HepG2 (cell line): ENCODE measurements at regions of chr20 and their contacts with region 1.

Region 1: DNA sequence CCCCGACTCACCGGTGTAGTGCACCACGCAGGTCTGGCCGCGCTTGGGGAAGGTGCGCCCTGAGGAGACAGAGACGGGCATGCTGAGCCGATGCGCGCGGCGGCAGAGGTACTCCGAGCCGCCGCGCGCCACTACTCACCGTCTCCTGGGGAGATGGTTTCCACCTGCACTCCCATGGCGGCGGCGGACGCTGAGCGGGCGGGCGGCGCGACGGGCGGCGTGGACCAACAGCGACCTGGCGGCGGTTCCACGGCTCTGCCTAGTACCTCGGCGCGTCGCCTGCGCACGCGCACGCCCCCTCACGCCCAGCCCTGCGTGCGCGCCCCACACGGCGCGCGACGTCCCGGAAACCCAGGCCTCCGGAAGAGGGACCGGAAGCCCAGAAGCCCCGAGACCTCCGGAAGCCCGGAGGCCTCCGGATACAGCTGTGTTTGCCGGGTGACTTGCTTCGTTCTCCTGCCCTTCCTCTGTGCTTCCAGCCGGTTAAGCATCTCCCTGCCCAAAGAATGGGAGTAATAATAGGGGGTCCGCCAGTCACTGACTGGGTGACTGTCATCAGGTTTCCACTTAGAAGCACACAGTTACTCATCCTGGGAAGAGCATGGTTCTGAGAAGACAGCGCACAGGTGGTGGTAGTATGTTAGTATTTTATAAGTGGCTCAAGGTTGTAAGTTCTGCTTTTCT is at the start of gene FKBP1A:
- DNase-seq: peak; percentile 94
- ATAC-seq: peak; percentile 95
- H3K4me3 ChIP-seq: peak within 1 kb of the TSS; percentile 78 to 91 (median 91)
- H3K27ac ChIP-seq: peak within 1 kb of the TSS; percentile 36
- H3K4me1 ChIP-seq: peaks cover 53% of the 10 kb centered on the region
- H3K27me3 ChIP-seq: peaks cover 0 to 17% of the 10 kb centered on the region in 2 experiments; a peak in 2 of 5 replicates
- CTCF ChIP-seq: peak; percentile 48
- EP300 ChIP-seq: peak in 1 of 2 experiments; percentile 64; a peak in 3 of 4 replicates
- POLR2A ChIP-seq: peak; percentile 69 to 98
- RAD21 ChIP-seq: peak; percentile 71
- total RNA-seq, gene FKBP1A: 119 and 188 TPM in 2 replicates

Region 2: GRCh38 chr20:986733-987355 is 406.1 kb before region 1 on chr20:
- CTCF ChIA-PET with region 1: no interaction called
- POLR2A ChIA-PET with region 1: no interaction called
- in situ Hi-C with region 1: no loop called
- intact Hi-C with region 1: no loop called
- DNase-seq: no peak
- ATAC-seq: no peak; the same call in 2 of the 3 replicates
- H3K4me3 ChIP-seq: no peak overlapping the region
- H3K27ac ChIP-seq: no peak overlapping the region
- H3K4me1 ChIP-seq: no peaks in the 10 kb centered on the region
- H3K27me3 ChIP-seq: peaks cover 3 to 34% of the 10 kb centered on the region in 2 experiments; a peak in 4 of 5 replicates
- CTCF ChIP-seq: no peak
- EP300 ChIP-seq: no peak
- POLR2A ChIP-seq: no peak
- RAD21 ChIP-seq: no peak

Region 3: GRCh38 chr20:1118336-1119127 is 274.4 kb before region 1 on chr20 and contains the start of gene PSMF1:
- CTCF ChIA-PET with region 1: no interaction called
- POLR2A ChIA-PET with region 1: no interaction called
- in situ Hi-C with region 1: no loop called
- intact Hi-C with region 1: loop called (anchors 10 kb)
- DNase-seq: peak; percentile 92
- ATAC-seq: peak; percentile 89
- H3K4me3 ChIP-seq: peak within 1 kb of the TSS; percentile 80 to 99 (median 93)
- H3K27ac ChIP-seq: peak within 1 kb of the TSS; percentile 72
- H3K4me1 ChIP-seq: peaks cover 62% of the 10 kb centered on the region
- H3K27me3 ChIP-seq: no peaks in the 10 kb centered on the region; a peak in 1 of 5 replicates
- CTCF ChIP-seq: peak; percentile 63
- EP300 ChIP-seq: peak; percentile 73 to 86
- POLR2A ChIP-seq: peak; percentile 97
- RAD21 ChIP-seq: peak; percentile 77
- total RNA-seq, gene PSMF1: 86.0 and 113 TPM in 2 replicates

Region 4: GRCh38 chr20:1313236-1313964 is 79.6 kb before region 1 on chr20:
- CTCF ChIA-PET with region 1: interaction called, 18 read pairs
- POLR2A ChIA-PET with region 1: interaction called, 3 read pairs
- in situ Hi-C with region 1: no loop called
- intact Hi-C with region 1: loop called (anchors 2 kb)
- DNase-seq: peak; percentile 71
- ATAC-seq: peak; percentile 83
- H3K4me3 ChIP-seq: no peak overlapping the region
- H3K27ac ChIP-seq: no peak overlapping the region
- H3K4me1 ChIP-seq: peaks cover 18% of the 10 kb centered on the region
- H3K27me3 ChIP-seq: peaks cover 0 to 3% of the 10 kb centered on the region in 2 experiments; a peak in 3 of 5 replicates
- CTCF ChIP-seq: peak; percentile 97
- EP300 ChIP-seq: no peak
- POLR2A ChIP-seq: no peak
- RAD21 ChIP-seq: peak; percentile 95

Region 5: GRCh38 chr20:1381753-1382591 is 11.0 kb before region 1 on chr20:
- CTCF ChIA-PET with region 1: no interaction called
- POLR2A ChIA-PET with region 1: interaction called, 11 read pairs
- in situ Hi-C with region 1: no loop called
- intact Hi-C with region 1: no loop called
- DNase-seq: no peak
- ATAC-seq: no peak
- H3K4me3 ChIP-seq: no peak overlapping the region
- H3K27ac ChIP-seq: no peak overlapping the region
- H3K4me1 ChIP-seq: peaks cover 81% of the 10 kb centered on the region
- H3K27me3 ChIP-seq: no peaks in the 10 kb centered on the region
- CTCF ChIP-seq: no peak
- EP300 ChIP-seq: no peak
- POLR2A ChIP-seq: no peak
- RAD21 ChIP-seq: no peak

Region 6: GRCh38 chr20:1437235-1437904 is 44.4 kb after region 1 on chr20:
- CTCF ChIA-PET with region 1: interaction called, 3 read pairs
- POLR2A ChIA-PET with region 1: no interaction called
- in situ Hi-C with region 1: no loop called
- intact Hi-C with region 1: loop called (anchors 2 kb)
- DNase-seq: peak; percentile 83
- ATAC-seq: peak; percentile 68
- H3K4me3 ChIP-seq: no peak overlapping the region
- H3K27ac ChIP-seq: no peak overlapping the region
- H3K4me1 ChIP-seq: no peaks in the 10 kb centered on the region
- H3K27me3 ChIP-seq: no peaks in the 10 kb centered on the region
- CTCF ChIP-seq: peak; percentile 98
- EP300 ChIP-seq: no peak
- POLR2A ChIP-seq: no peak
- RAD21 ChIP-seq: peak; percentile 85

Region 7: DNA sequence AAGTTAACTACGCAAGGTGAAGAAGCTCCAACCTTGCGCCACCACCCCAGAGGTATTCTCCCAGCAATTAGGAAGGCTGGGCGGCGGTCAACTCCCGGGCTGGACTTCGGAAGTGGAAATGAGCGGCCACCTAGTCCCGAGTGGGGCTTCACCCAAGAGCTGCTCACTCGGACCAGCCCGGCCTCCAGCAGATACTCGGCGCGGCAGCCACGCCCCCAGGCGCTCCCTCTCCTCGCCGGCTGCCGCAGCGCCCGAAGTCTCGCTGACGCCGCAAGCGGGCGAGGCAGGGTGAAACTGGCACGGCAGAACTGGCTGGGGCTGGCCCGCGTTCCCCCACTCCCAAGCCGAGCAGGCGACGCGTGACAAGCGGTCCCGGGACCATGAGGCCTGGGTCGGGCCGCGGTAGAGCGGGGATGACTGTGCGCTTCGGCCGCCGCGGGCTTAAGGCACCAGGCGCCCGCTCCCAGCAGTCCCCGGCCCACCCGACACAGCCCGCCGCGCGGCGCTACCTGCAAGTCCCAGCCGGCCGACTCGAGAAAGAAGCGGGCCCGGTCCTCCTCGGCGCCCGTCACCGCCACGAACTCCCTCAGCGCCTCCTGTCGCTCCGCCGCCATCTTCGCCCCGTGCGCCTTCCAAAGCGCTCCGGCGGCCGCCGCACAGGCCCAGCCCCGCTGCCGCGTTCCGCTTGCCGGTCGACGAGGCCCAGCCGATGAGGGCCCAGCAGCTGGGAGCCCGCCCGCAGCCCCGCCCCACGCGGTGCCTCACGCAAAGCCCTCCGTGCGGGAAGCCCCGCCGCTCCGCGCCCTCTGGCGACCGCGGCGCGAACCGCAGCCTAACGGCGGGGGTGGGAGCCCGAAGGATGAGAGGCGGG is 73.5 kb after region 1 on chr20 and contains the start of gene NSFL1C:
- CTCF ChIA-PET with region 1: no interaction called
- POLR2A ChIA-PET with region 1: interaction called, 8 read pairs
- in situ Hi-C with region 1: no loop called
- intact Hi-C with region 1: loop called (anchors 2 kb)
- DNase-seq: peak; percentile 92
- ATAC-seq: peak; percentile 87
- H3K4me3 ChIP-seq: peak within 1 kb of the TSS; percentile 85 to 99 (median 98)
- H3K27ac ChIP-seq: peak within 1 kb of the TSS; percentile 80
- H3K4me1 ChIP-seq: peaks cover 69% of the 10 kb centered on the region
- H3K27me3 ChIP-seq: no peaks in the 10 kb centered on the region; a peak in 2 of 5 replicates
- CTCF ChIP-seq: peak; percentile 95
- EP300 ChIP-seq: peak; percentile 46 to 72
- POLR2A ChIP-seq: peak; percentile 88
- RAD21 ChIP-seq: peak; percentile 93
- total RNA-seq, gene NSFL1C: 62.7 and 74.0 TPM in 2 replicates

Region 8: DNA sequence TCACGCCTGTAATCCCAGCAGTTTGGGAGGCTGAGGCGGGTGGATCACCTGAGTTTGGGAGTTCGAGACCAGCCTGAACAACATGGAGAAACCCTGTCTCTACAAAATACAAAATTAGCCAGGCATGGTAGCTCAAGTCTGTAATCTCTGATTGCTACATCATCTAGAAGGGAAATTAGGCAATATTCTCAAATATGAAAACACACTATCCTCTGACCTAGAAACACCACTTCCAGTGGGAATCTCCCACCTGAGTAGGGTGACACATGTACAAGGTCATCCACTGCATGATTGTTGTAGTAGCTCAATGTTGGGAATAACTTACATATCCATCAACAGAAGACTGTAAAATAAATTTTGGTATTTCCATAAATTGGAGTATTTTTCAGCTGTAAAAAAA is 183.7 kb after region 1 on chr20:
- CTCF ChIA-PET with region 1: no interaction called
- POLR2A ChIA-PET with region 1: no interaction called
- in situ Hi-C with region 1: no loop called
- intact Hi-C with region 1: no loop called
- DNase-seq: no peak
- ATAC-seq: no peak
- H3K4me3 ChIP-seq: no peak overlapping the region
- H3K27ac ChIP-seq: no peak overlapping the region
- H3K4me1 ChIP-seq: no peaks in the 10 kb centered on the region
- H3K27me3 ChIP-seq: no peaks in the 10 kb centered on the region
- CTCF ChIP-seq: no peak
- EP300 ChIP-seq: no peak
- POLR2A ChIP-seq: no peak
- RAD21 ChIP-seq: no peak